MCF 10A (cell line): ENCODE measurements at regions of chr19 and their contacts with region 1.

Region 1: DNA sequence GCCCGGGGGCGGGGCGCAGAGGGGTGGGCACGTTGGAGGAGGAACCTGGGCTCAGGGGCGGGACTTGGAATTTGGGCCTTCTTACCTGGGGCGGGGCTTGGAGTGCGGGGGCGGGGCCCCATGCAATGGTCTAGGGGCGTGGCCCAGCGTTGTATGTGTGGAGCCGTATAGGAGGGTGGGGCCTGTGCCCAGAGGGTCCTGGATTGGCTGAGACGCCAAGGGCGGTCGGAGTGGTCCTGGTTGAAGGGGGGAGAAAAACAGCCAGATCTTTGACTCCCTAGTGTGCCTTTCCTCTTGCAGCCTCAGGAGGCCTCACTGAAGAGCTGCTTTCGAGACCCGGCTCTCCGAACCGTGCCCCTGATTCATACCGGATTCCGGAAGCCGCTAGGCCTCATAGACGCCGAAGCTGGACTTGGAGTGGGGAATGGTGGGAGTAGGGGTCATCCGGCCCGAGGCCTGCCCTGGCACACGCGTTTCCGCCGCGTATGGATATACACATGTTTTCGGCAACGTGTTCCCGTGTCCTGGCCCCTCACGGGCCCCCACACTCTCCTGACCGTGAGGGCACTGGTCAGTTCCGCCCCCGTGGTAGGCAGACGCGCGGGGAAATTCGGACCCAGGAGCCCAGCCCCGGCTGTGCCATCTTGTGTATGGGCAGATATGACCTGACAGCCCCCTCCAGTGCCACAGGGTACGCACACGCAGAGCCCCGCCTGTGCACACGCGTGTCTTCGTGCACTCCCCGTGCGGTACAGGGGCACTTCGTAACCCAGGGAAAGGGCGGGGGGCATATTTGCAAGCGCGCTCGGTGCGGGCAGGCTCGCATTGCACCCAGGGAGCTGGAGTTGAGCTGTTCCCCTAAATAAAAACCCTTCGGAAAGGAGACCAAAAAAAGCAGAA is 661 bp upstream of the PRR12 start:
- DNase-seq: peak; percentile 99
- H3K4me3 Mint-ChIP-seq: peak overlapping the region; percentile 71
- H3K27ac Mint-ChIP-seq: peak overlapping the region; percentile 33
- H3K4me1 Mint-ChIP-seq: peaks cover 27% of the 10 kb centered on the region
- H3K27me3 Mint-ChIP-seq: no peaks in the 10 kb centered on the region
- CTCF ChIP-seq: no peak

Region 2: DNA sequence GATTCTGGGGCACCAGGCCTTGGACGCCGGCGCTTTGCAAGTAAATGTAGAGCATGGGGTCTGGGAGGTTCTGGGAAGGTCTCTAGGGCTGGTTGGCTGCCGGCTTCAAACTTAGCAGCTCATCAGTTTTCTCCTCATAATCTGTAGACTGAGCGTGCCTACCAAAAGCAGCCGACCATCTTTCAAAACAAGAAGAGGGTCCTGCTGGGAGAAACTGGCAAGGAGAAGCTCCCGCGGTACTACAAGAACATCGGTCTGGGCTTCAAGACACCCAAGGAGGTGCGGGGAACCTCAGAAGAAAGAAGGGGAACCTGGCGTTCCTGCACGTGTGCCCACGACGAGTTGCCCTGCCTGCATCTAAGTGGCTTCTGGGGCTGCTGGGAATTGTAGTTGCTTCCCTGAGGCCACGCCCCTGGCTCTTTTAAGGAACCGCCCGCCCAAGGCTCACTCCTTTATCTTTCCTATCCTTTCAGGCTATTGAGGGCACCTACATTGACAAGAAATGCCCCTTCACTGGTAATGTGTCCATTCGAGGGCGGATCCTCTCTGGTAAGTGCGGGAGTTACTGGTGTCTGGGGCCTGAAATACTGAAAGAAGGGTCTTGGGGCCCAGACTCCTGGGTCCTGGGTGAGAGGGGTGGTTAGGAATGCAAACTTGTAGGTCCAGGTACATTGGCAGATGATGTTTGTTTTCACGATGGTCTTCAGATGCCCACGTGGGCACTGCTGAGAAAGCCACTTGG is 93.1 kb before region 1 on chr19:
- CTCF ChIA-PET with region 1: no interaction called
- POLR2A ChIA-PET with region 1: interaction called, 17 read pairs
- intact Hi-C with region 1: no loop called
- DNase-seq: peak; percentile 68
- H3K4me3 Mint-ChIP-seq: peak overlapping the region; percentile 91
- H3K27ac Mint-ChIP-seq: peak overlapping the region; percentile 97
- H3K4me1 Mint-ChIP-seq: peaks cover 6% of the 10 kb centered on the region
- H3K27me3 Mint-ChIP-seq: no peaks in the 10 kb centered on the region
- CTCF ChIP-seq: no peak

Region 3: GRCh38 chr19:49665351-49666119 is 75.2 kb after region 1 on chr19 and contains the starts of genes BCL2L12 and IRF3:
- CTCF ChIA-PET with region 1: interaction called, 3 read pairs
- POLR2A ChIA-PET with region 1: interaction called, 13 read pairs
- intact Hi-C with region 1: no loop called
- DNase-seq: peak; percentile 98
- H3K4me3 Mint-ChIP-seq: peak within 1 kb of the TSS; percentile 91
- H3K27ac Mint-ChIP-seq: peak within 1 kb of the TSS; percentile 91
- H3K4me1 Mint-ChIP-seq: peaks cover 17% of the 10 kb centered on the region
- H3K27me3 Mint-ChIP-seq: no peaks in the 10 kb centered on the region
- CTCF ChIP-seq: no peak
- total RNA-seq, gene BCL2L12: 29.4 and 36.0 TPM in 2 replicates
- total RNA-seq, gene IRF3: 65.6 and 82.2 TPM in 2 replicates

Region 4: GRCh38 chr19:49786376-49786820 is 196.1 kb after region 1 on chr19:
- CTCF ChIA-PET with region 1: no interaction called
- POLR2A ChIA-PET with region 1: no interaction called
- intact Hi-C with region 1: no loop called
- DNase-seq: peak; percentile 21
- H3K4me3 Mint-ChIP-seq: no peak overlapping the region
- H3K27ac Mint-ChIP-seq: peak overlapping the region; percentile 16
- H3K4me1 Mint-ChIP-seq: peaks cover 7% of the 10 kb centered on the region
- H3K27me3 Mint-ChIP-seq: no peaks in the 10 kb centered on the region
- CTCF ChIP-seq: no peak